Lower leg skin (tissue), 4 donors: ENCODE measurements at regions of chr13 and their contacts with region 1.

Region 1: DNA sequence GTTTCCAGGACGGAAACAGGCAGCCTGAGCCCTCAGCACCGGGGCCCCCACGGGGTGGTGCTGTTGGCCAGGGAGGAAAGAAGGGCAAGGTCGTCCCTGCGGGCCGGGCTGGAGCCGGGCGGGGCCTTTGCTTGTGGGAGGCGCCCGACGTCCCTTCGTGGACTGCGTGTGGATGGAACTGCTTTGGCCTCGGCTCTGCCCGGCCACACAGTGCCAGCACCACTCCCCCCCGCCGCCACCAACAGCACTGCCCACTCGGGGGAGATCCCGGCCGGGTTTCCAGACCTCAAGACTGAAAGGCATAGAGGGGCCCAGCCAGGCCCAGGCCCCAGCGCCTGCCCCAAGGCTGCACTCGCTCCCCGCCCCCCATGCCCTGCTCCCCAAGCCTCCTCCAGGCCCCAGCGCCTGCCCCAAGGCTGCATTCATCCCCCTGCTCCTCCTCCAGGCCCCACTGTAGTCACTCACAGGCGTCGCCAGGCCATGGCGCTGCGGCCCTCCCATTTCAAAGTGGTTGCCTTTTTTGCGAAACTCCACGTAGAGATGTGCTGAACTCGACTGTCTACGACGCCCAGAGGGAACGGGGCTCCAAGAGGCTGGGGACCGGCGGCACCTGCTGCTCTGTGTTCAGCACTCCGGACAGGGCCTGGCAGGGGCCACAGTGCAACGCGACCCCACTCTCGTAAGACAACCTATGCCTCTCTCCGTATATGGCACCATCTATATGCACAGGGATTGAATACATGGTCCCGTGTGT is 22.5 kb downstream of the C13orf46 start:
- DNase-seq: peak; percentile 78 to 97
- H3K4me3 ChIP-seq: no peak overlapping the region
- CTCF ChIP-seq: peak in 1 of 3 donors; percentile 74
- POLR2A ChIP-seq: no peak

Region 2: GRCh38 chr13:113816946-113817859 is 134.2 kb before region 1 on chr13:
- intact Hi-C with region 1: loop called (anchors 5 kb)
- DNase-seq: peak; percentile 90 to 97
- H3K4me3 ChIP-seq: no peak overlapping the region
- CTCF ChIP-seq: peak in 1 of 3 donors; percentile 60
- POLR2A ChIP-seq: no peak

Region 3: GRCh38 chr13:114226699-114227323 is 275.4 kb after region 1 on chr13:
- intact Hi-C with region 1: loop called (anchors 2 kb)
- DNase-seq: peak; percentile 87 to 97
- H3K4me3 ChIP-seq: no peak overlapping the region
- CTCF ChIP-seq: peak in 2 of 3 donors; percentile 75 to 76
- POLR2A ChIP-seq: no peak